ENCODE measurements at regions of chr20 and their contacts with region 1.

Region 1: GRCh38 chr20:18412221-18412901 is 54.5 kb downstream of the DZANK1 start:
- DNase-seq: no peak
- ATAC-seq: no peak
- H3K4me3 ChIP-seq: no peak overlapping the region
- H3K27ac ChIP-seq: no peak overlapping the region
- H3K4me1 ChIP-seq: no peaks in the 10 kb centered on the region
- H3K27me3 ChIP-seq: no peaks in the 10 kb centered on the region
- CTCF ChIP-seq: no peak

Region 2: DNA sequence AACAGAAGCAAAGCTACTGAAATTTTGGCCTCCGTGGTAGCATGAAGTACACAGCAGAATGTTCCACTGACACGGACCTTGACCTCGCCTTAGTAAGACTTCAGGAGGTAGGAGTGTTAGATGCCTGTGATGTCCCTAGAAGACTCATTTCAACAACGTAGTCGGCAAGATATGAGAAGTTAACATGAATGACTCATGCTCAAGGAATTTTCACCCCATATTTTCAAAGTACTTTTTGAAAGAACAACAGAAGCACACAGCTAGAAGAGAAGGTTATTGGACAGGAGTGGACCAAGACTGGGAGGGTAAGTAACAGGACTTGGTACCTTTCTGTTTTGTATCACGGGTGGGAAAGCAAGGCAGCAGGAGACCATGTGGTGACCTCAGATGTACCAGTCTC is 23.5 kb before region 1 on chr20:
- CTCF ChIA-PET with region 1: no interaction called
- POLR2A ChIA-PET with region 1: interaction called, 12 read pairs
- in situ Hi-C with region 1: no loop called
- intact Hi-C with region 1: no loop called
- DNase-seq: no peak
- ATAC-seq: no peak
- H3K4me3 ChIP-seq: no peak overlapping the region
- H3K27ac ChIP-seq: no peak overlapping the region
- H3K4me1 ChIP-seq: no peaks in the 10 kb centered on the region
- H3K27me3 ChIP-seq: no peaks in the 10 kb centered on the region
- CTCF ChIP-seq: no peak